ENCODE measurements at regions of chr22 and their contacts with region 1.

Region 1: DNA sequence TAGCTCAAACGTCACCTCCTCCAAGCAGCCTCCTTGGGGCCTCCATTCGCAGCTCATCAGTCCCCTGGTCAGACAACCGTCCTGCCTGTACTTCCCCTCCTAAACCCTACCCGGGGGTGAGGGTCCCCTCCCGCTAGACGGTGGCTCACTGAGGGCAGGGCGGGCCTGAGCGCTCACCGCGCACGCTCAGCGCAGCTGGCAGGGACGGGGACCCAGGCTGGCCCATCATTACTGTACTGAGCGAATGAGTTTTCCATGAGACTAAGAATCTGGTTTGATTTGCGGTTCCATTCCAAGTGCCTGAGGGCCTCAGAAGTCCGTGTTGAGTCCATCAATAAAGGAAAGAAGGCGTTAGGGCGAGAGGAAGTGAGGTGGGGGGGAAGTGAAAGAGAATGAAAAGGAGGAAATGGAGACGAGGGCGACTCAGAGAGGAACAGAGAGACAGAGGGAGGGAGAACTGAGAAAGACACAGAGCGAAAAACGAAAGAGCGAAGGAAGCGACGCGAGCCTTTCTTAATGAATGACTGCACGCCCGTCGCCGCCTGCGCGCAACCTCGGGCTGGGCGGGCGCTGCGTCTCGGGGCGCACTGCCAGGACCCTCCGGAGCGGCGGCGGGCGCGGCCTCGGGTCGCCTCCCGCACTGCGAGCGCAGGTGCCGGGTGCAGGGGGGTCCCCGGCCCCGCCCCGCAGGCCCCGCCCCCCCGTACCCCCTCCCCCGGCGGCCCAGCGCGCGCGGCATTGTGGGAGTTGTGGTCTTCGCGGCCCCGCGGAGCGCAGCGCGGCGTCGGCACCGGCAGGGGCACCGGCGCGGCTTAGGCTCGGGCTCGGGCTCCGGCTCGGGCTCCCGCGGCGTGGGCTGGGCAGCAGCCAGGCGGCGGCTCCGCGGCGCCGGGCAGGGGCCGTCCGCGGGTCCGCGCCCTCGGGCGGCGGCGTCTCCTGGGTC is at the start of gene ASPHD2:
- DNase-seq: peak; percentile 72 to 87 (median 83)
- ATAC-seq: peak; percentile 92
- H3K4me3 ChIP-seq: peak within 1 kb of the TSS; percentile 93
- H3K4me3 Mint-ChIP-seq: peak within 1 kb of the TSS; percentile 91 to 99 (median 99)
- H3K27ac ChIP-seq: peak within 1 kb of the TSS; percentile 88
- H3K27ac Mint-ChIP-seq: peak within 1 kb of the TSS; percentile 94 to 99 (median 98)
- H3K4me1 ChIP-seq: peaks cover 8 to 17% of the 10 kb centered on the region in 2 donors
- H3K4me1 Mint-ChIP-seq: peaks cover 14 to 55% (median 33%) of the 10 kb centered on the region in 7 donors
- H3K27me3 ChIP-seq: no peaks in the 10 kb centered on the region
- H3K27me3 Mint-ChIP-seq: peaks cover 0 to 22% (median 5%) of the 10 kb centered on the region in 5 donors
- total RNA-seq, gene ASPHD2: 1.8 to 18.1 (median 2.7) TPM

Region 2: GRCh38 chr22:26364066-26365015 is 64.4 kb before region 1 on chr22:
- CTCF ChIA-PET with region 1: no interaction called
- POLR2A ChIA-PET with region 1: no interaction called
- intact Hi-C with region 1: loop called in 1 of 2 experiments (anchors 2 kb)
- DNase-seq: peak in 8 of 9 donors; percentile 33 to 56 (median 47)
- ATAC-seq: peak; percentile 84
- H3K4me3 ChIP-seq: no peak overlapping the region
- H3K4me3 Mint-ChIP-seq: no peak overlapping the region
- H3K27ac ChIP-seq: no peak overlapping the region
- H3K27ac Mint-ChIP-seq: no peak overlapping the region
- H3K4me1 ChIP-seq: no peaks in the 10 kb centered on the region
- H3K4me1 Mint-ChIP-seq: peaks cover 4 to 13% (median 6%) of the 10 kb centered on the region in 7 donors
- H3K27me3 ChIP-seq: peaks cover 0 to 3% of the 10 kb centered on the region in 2 donors
- H3K27me3 Mint-ChIP-seq: peaks cover 7 to 18% (median 12%) of the 10 kb centered on the region in 5 donors

Region 3: DNA sequence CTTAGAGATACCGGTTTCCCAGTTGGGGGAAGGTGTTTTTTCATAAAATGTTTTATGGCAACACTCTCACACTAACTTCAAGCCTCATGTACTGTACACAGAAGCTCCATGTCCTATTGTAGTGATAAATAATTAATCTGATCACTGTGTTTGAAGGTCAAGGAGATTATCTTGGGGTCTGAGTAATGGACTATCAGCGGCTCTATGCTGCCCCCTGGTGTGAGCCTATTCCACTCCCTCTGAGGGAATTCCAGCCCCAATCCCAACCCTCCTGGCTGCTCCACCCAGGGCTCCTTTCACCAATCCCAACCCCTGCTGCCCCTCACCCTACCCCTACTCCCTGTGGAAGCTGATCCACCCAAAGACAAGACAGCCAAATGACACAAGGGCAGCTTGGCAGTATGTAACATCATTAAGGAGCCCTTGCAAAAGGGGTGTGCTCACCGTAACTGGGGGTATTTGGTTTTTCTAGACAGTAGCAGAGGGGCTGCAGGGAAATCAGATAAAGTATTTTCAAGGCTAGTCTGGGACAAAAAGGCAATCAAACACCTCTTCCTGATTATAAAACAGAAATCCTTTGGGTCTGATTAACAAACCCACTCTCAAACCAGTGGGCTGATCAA is 32.5 kb after region 1 on chr22:
- CTCF ChIA-PET with region 1: interaction called, 5 read pairs
- POLR2A ChIA-PET with region 1: no interaction called
- intact Hi-C with region 1: loop called in 1 of 2 experiments (anchors 5 kb)
- DNase-seq: peak in 4 of 9 donors; percentile 15 to 45 (median 30)
- ATAC-seq: peak; percentile 66
- H3K4me3 ChIP-seq: no peak overlapping the region
- H3K4me3 Mint-ChIP-seq: no peak overlapping the region
- H3K27ac ChIP-seq: no peak overlapping the region
- H3K27ac Mint-ChIP-seq: peak overlapping the region in 2 of 9 donors; percentile 42 to 56
- H3K4me1 ChIP-seq: no peaks in the 10 kb centered on the region
- H3K4me1 Mint-ChIP-seq: peaks cover 0 to 6% (median 4%) of the 10 kb centered on the region in 7 donors
- H3K27me3 ChIP-seq: no peaks in the 10 kb centered on the region
- H3K27me3 Mint-ChIP-seq: no peaks in the 10 kb centered on the region

Region 4: GRCh38 chr22:26511857-26512793 is 83.3 kb after region 1 on chr22 and contains the start of gene TFIP11:
- CTCF ChIA-PET with region 1: no interaction called
- POLR2A ChIA-PET with region 1: no interaction called
- intact Hi-C with region 1: loop called (anchors 1 to 10 kb)
- DNase-seq: peak; percentile 80 to 93 (median 84)
- ATAC-seq: peak; percentile 97
- H3K4me3 ChIP-seq: peak within 1 kb of the TSS; percentile 89
- H3K4me3 Mint-ChIP-seq: peak within 1 kb of the TSS; percentile 96 to 100 (median 99)
- H3K27ac ChIP-seq: peak within 1 kb of the TSS; percentile 96
- H3K27ac Mint-ChIP-seq: peak within 1 kb of the TSS; percentile 96 to 100 (median 99)
- H3K4me1 ChIP-seq: peaks cover 9 to 23% of the 10 kb centered on the region in 2 donors
- H3K4me1 Mint-ChIP-seq: peaks cover 29 to 52% (median 50%) of the 10 kb centered on the region in 7 donors
- H3K27me3 ChIP-seq: no peaks in the 10 kb centered on the region
- H3K27me3 Mint-ChIP-seq: no peaks in the 10 kb centered on the region
- total RNA-seq, gene TFIP11: 63.6 to 107 (median 72.9) TPM